Endothelial cell of umbilical vein (primary cell): ENCODE measurements at regions of chr10 and their contacts with region 1.

Region 1: DNA sequence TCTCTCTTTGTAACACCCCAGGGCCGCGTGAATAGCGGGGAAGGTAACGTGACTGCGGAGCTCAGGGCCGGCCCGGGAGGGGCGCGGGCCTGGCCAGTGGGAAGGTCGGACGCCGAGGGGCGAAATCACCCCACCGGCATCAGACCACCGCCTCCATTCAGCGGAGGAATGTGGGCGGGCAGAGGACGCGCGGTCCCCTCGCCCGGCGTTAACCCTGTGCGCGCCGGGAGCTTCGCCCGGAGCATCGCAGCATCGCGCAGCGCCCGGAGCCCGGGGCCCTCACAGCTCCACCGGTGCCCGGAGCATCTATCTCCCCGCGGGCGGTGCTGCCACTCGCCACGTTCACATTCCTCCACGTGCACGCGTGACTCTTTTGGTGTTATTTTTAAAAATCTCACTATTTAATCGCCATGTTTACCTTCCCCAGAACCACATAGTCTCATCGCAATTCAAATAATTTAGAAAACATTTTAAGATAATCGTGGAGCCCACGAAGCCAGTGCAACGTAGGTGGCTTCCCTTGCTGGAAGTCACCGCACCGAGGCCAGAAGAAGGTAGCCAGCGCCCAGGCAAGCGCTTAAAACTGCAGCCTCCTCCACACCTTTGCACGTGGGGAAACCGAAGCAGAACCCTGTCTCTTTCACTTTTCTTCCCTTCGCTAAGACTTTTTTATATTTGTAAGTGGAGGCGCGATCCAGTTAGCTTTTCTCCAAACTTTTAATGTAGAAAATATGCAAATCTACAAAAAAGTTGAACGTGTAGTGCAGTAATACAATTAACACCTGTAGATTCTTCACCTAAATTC is 21.8 kb downstream of the FGFBP3 start:
- DNase-seq: peak; percentile 42
- H3K4me3 ChIP-seq: peak overlapping the region; percentile 48 to 86 (median 83)
- H3K27ac ChIP-seq: no peak overlapping the region
- H3K4me1 ChIP-seq: peaks cover 19% of the 10 kb centered on the region
- H3K27me3 ChIP-seq: no peaks in the 10 kb centered on the region
- CTCF ChIP-seq: no peak
- POLR2A ChIP-seq: no peak

Region 2: GRCh38 chr10:91541481-91541880 is 346.0 kb before region 1 on chr10:
- CTCF ChIA-PET with region 1: no interaction called
- POLR2A ChIA-PET with region 1: no interaction called
- dilution Hi-C with region 1: no loop called
- intact Hi-C with region 1: no loop called
- DNase-seq: no peak
- H3K4me3 ChIP-seq: no peak overlapping the region
- H3K27ac ChIP-seq: no peak overlapping the region
- H3K4me1 ChIP-seq: no peaks in the 10 kb centered on the region
- H3K27me3 ChIP-seq: no peaks in the 10 kb centered on the region
- CTCF ChIP-seq: no peak
- POLR2A ChIP-seq: no peak

Region 3: GRCh38 chr10:91694170-91694794 is 193.2 kb before region 1 on chr10:
- CTCF ChIA-PET with region 1: no interaction called
- POLR2A ChIA-PET with region 1: no interaction called
- dilution Hi-C with region 1: no loop called
- intact Hi-C with region 1: no loop called
- DNase-seq: peak; percentile 48
- H3K4me3 ChIP-seq: no peak overlapping the region
- H3K27ac ChIP-seq: no peak overlapping the region
- H3K4me1 ChIP-seq: no peaks in the 10 kb centered on the region
- H3K27me3 ChIP-seq: peaks cover 3 to 4% of the 10 kb centered on the region in 2 experiments
- CTCF ChIP-seq: peak; percentile 58 to 65
- POLR2A ChIP-seq: no peak

Region 4: DNA sequence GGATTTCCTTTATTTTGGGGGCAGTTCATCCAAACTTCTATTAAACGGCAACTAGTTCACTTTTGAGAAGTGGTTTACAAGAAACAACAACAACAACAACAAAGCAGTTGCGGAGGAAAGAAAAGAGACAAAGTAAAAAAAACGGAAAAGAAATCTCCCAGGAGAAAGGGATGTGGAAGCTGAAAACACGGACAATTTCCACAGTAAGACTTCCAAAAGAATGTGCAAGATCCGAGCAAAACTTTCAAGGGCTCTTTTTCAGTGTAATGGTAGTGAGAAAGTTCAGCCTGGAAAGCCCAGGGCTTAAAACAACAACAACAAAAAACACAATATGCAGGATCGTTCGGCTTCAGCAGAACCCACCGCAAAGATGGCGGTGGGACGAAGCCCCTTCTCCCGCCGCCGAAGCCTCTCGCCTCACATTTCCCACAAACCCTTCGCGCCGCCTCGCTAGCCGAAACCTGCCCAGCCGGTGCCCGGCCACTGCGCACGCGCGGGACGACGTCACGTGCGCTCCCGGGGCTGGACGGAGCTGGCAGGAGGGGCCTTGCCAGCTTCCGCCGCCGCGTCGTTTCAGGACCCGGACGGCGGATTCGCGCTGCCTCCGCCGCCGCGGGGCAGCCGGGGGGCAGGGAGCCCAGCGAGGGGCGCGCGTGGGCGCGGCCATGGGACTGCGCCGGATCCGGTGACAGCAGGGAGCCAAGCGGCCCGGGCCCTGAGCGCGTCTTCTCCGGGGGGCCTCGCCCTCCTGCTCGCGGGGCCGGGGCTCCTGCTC is 89.4 kb before region 1 on chr10 and contains the start of gene TNKS2:
- CTCF ChIA-PET with region 1: no interaction called
- POLR2A ChIA-PET with region 1: no interaction called
- dilution Hi-C with region 1: no loop called
- intact Hi-C with region 1: loop called (anchors 1 kb)
- DNase-seq: peak; percentile 96
- H3K4me3 ChIP-seq: peak within 1 kb of the TSS; percentile 89 to 97 (median 89)
- H3K27ac ChIP-seq: peak within 1 kb of the TSS; percentile 64
- H3K4me1 ChIP-seq: peaks cover 24% of the 10 kb centered on the region
- H3K27me3 ChIP-seq: no peaks in the 10 kb centered on the region
- CTCF ChIP-seq: no peak
- POLR2A ChIP-seq: peak; percentile 95
- total RNA-seq, gene TNKS2: 33.3 and 34.0 TPM in 2 replicates

Region 5: GRCh38 chr10:91901784-91902677 is 14.6 kb after region 1 on chr10:
- CTCF ChIA-PET with region 1: interaction called, 11 read pairs
- POLR2A ChIA-PET with region 1: interaction called, 3 read pairs
- dilution Hi-C with region 1: no loop called
- intact Hi-C with region 1: loop called (anchors 1 kb)
- DNase-seq: peak; percentile 97
- H3K4me3 ChIP-seq: no peak overlapping the region
- H3K27ac ChIP-seq: peak overlapping the region; percentile 63
- H3K4me1 ChIP-seq: peaks cover 24% of the 10 kb centered on the region
- H3K27me3 ChIP-seq: no peaks in the 10 kb centered on the region
- CTCF ChIP-seq: no peak
- POLR2A ChIP-seq: no peak